Tibial artery (tissue), 4 donors: ENCODE measurements at regions of chr6 and their contacts with region 1.

Region 1: DNA sequence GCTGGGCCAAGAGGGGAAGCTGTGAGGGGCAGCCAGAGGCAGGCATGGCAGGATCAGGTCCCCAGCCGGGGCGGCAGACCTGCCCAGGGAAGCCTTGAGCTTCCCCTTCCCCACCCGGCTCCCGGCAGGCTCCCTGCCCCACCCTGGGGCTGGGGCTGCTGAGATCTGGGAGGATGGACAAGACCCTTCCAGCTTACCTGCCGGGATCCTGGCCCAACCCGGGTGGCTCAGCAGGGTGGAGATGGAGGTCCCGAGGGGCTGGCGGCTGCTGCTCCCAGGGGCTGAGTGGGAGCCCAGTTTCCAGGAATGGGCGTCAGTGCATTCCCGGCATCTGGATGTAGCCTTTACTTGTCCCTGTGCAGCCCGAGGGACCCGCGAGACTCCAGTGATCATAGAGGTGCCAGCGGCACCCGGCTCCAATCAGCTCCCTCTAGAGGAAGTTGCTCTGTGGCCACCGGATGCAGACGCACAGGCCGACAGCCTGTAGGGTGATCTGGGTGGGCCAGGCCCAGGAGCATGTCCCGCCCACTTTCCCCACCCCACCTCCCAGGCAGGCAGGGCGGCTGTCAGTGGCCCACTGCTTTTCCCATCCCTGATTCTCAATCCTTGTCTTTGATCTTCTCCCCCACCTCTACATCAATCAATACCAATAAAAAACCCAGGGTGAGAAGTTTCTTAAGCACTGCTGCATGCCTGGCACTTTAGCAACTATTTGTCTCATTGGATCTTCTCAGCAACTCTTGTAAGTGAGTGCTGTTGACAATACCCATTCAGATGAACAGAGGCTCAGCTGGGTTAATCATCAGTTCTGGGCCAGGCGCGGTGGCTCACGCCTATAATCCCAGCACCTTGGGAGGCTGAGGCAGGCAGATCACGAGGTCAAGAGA is at the start of gene BAK1:
- DNase-seq: peak; percentile 91 to 94
- H3K4me3 ChIP-seq: peak within 1 kb of the TSS; percentile 68 to 94
- H3K27ac ChIP-seq: peak within 1 kb of the TSS; percentile 85 to 86
- H3K4me1 ChIP-seq: peaks cover 0 to 23% (median 16%) of the 10 kb centered on the region in 4 donors
- H3K27me3 ChIP-seq: no peaks in the 10 kb centered on the region
- CTCF ChIP-seq: peak; percentile 42 to 45

Region 2: DNA sequence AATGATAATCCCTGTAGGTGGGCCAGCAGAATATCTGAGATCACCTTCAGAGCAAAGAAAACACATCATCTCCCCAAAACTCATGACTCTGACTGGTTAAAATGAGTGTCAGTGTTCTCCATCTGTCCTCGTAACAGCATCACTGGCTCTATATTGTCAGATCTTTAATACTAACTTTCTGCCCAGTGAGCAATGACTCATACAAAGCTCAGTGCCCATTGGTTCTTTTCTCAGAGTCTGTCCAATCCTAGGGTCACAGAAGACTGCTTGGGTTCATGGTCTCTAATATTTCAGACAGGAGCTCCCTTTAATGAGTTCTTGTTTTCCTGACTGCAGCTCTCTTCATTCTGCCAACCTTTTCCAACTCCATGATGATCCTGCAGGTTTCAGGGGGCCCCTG is 467.9 kb before region 1 on chr6:
- intact Hi-C with region 1: loop called (anchors 10 kb)
- DNase-seq: no peak
- H3K4me3 ChIP-seq: no peak overlapping the region
- H3K27ac ChIP-seq: no peak overlapping the region
- H3K4me1 ChIP-seq: peaks cover 0 to 7% (median 3%) of the 10 kb centered on the region in 4 donors
- H3K27me3 ChIP-seq: peaks cover 3 to 43% of the 10 kb centered on the region in 2 donors
- CTCF ChIP-seq: no peak

Region 3: GRCh38 chr6:33384581-33385020 is 195.5 kb before region 1 on chr6:
- intact Hi-C with region 1: loop called (anchors 10 kb)
- DNase-seq: no peak
- H3K4me3 ChIP-seq: no peak overlapping the region
- H3K27ac ChIP-seq: no peak overlapping the region
- H3K4me1 ChIP-seq: no peaks in the 10 kb centered on the region
- H3K27me3 ChIP-seq: no peaks in the 10 kb centered on the region
- CTCF ChIP-seq: peak in 1 of 2 experiments; percentile 30

Region 4: DNA sequence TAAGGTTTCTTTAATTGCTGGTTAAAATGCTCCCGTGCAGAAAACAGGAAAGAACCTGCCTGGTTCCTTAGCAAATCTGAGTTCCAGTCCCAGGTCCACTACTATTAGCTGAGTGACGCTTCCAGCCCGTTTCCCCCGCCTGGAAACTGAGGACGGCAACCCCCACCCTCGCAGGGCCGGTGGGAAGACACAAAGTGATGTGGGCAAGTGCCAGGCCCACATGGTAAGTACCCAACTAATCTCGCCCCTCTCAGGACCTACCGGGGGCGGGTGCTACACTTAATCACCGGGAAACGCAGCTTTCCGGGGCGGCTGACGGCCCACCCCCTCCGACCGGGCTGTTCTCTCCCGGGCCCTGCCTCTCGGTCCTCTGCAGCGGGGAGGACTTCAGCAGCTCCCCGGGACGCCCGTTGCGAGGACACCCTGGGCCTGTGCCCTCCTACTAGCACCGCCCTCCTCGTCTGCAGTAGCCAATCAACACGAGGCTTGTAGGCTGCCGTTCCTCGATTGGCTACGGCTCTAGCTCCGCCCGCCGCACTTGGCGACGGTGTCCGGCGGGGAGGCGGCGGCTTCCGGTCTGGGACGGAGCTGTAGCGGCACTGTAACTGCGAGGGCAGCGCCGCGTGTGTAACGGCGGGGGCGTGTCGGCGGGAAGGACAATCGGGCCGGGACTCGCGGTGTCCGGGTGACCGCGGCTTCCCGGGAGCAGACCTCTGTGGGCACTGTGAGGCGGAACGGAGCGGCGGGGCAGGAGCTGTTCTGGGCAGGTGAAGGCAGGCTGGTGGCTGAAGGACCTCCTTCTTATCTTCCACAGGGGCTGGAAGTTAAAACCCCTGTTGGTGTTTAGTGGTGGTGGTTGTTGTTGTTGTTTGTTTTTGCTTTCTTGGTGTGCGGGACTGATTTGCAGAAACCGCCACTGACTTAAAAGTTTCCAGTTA is 125.8 kb before region 1 on chr6 and contains the start of gene ZBTB9:
- intact Hi-C with region 1: loop called (anchors 10 kb)
- DNase-seq: peak; percentile 96 to 98
- H3K4me3 ChIP-seq: peak within 1 kb of the TSS; percentile 73 to 82
- H3K27ac ChIP-seq: peak within 1 kb of the TSS; percentile 76 to 82
- H3K4me1 ChIP-seq: peaks cover 0 to 21% (median 18%) of the 10 kb centered on the region in 4 donors
- H3K27me3 ChIP-seq: no peaks in the 10 kb centered on the region
- CTCF ChIP-seq: peak in 1 of 2 experiments; percentile 1

Region 5: DNA sequence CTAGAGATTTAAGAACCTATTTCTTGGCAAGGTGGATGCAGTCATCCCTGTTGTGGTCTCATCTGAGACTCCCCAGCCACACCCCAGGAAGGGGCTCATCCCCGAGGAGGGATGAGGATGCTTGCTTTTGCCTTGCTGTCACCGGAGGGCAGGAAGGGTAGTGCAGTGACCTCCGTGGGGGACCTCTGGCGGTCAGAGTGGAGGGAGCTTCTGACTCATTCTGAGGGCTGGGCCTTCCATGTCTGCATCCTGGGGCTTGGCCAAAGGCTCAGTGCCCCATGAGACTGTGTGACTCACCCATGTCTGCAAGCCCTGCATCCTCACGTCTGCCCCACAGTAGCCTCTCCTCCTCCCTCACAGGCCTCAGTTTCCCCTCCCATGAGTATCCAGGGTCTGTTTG is 92.7 kb after region 1 on chr6:
- intact Hi-C with region 1: no loop called
- DNase-seq: peak; percentile 95 to 96
- H3K4me3 ChIP-seq: no peak overlapping the region
- H3K27ac ChIP-seq: peak overlapping the region in 1 of 2 donors; percentile 33
- H3K4me1 ChIP-seq: peaks cover 0 to 24% (median 10%) of the 10 kb centered on the region in 4 donors
- H3K27me3 ChIP-seq: peaks cover 0 to 6% of the 10 kb centered on the region in 2 donors
- CTCF ChIP-seq: peak; percentile 67 to 79